H1 (cell line): ENCODE measurements at regions of chr5 and their contacts with region 1.

Region 1: GRCh38 chr5:17216176-17216973 is 1.1 kb upstream of the BASP1 start:
- DNase-seq: peak; percentile 63 to 84
- H3K4me3 ChIP-seq: peak overlapping the region; percentile 55 to 97 (median 80)
- H3K27ac ChIP-seq: no peak overlapping the region
- H3K4me1 ChIP-seq: peaks cover 2 to 11% (median 9%) of the 10 kb centered on the region in 4 experiments; a peak in 4 of 7 replicates
- H3K27me3 ChIP-seq: no peaks in the 10 kb centered on the region
- CTCF ChIP-seq: peak; percentile 65 to 88 (median 70)
- EP300 ChIP-seq: no peak
- POLR2A ChIP-seq: no peak
- RAD21 ChIP-seq: peak; percentile 93 to 94

Region 2: GRCh38 chr5:17069995-17070511 is 146.3 kb before region 1 on chr5:
- CTCF ChIA-PET with region 1: no interaction called
- POLR2A ChIA-PET with region 1: no interaction called
- DNase-seq: no peak
- H3K4me3 ChIP-seq: no peak overlapping the region
- H3K27ac ChIP-seq: no peak overlapping the region
- H3K4me1 ChIP-seq: no peaks in the 10 kb centered on the region; a peak in 1 of 7 replicates
- H3K27me3 ChIP-seq: no peaks in the 10 kb centered on the region
- CTCF ChIP-seq: no peak
- EP300 ChIP-seq: no peak
- POLR2A ChIP-seq: no peak
- RAD21 ChIP-seq: no peak

Region 3: GRCh38 chr5:17204133-17204489 is 12.3 kb before region 1 on chr5:
- CTCF ChIA-PET with region 1: interaction called, 12 read pairs
- POLR2A ChIA-PET with region 1: no interaction called
- DNase-seq: no peak
- H3K4me3 ChIP-seq: no peak overlapping the region
- H3K27ac ChIP-seq: no peak overlapping the region
- H3K4me1 ChIP-seq: peaks cover 0 to 2% (median 0%) of the 10 kb centered on the region in 4 experiments; a peak in 2 of 7 replicates
- H3K27me3 ChIP-seq: no peaks in the 10 kb centered on the region
- CTCF ChIP-seq: no peak
- EP300 ChIP-seq: no peak
- POLR2A ChIP-seq: no peak
- RAD21 ChIP-seq: no peak

Region 4: DNA sequence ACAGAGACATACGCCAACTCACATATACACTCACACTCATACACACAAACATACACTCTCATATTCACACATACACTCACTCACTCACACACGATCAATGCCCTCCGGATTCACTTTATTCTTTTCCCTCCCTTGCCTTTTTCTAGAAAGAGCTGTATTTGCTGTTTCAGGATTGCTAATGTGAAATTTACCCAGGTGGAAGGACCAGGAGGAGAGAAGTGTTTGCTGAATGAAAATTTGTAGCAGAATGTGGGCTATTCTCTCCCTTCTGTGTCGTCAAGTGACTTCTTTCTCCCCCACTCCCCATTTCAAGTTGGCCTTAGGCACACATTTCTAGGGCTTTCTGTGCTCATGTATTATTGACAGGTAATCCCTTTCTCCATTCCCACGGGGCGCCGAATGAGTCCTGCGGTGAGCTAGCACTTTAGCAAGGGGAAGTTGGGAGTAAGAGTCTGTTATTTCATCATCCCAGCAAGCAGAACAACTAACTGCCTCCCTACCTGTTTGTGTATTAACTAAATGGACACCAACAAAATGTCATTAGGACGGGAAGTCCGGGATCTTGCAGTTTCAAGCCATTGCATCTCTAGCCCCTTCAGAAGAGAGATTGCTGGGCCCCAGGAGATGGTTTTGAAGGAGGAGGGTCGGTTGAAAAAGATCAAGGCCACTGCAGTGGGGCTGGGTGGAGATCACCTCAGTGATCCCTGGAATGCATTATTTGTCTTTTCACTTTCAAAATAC is 184.5 kb after region 1 on chr5:
- CTCF ChIA-PET with region 1: interaction called, 23 read pairs
- POLR2A ChIA-PET with region 1: interaction called, 14 read pairs
- DNase-seq: peak in 1 of 2 experiments; percentile 55
- H3K4me3 ChIP-seq: peak overlapping the region in 2 of 4 experiments; percentile 11 to 47; a peak in 4 of 8 replicates
- H3K27ac ChIP-seq: 0 out of 2 replicates have a peak overlapping the region, but pooled peaks have one; percentile 0
- H3K4me1 ChIP-seq: peaks cover 7 to 36% (median 28%) of the 10 kb centered on the region in 4 experiments
- H3K27me3 ChIP-seq: peaks cover 0 to 6% (median 1%) of the 10 kb centered on the region in 4 experiments; a peak in 5 of 7 replicates
- CTCF ChIP-seq: no peak
- EP300 ChIP-seq: no peak
- POLR2A ChIP-seq: no peak
- RAD21 ChIP-seq: no peak

Region 5: GRCh38 chr5:17436761-17437221 is 220.4 kb after region 1 on chr5:
- CTCF ChIA-PET with region 1: interaction called, 21 read pairs
- POLR2A ChIA-PET with region 1: no interaction called
- DNase-seq: no peak
- H3K4me3 ChIP-seq: no peak overlapping the region
- H3K27ac ChIP-seq: no peak overlapping the region
- H3K4me1 ChIP-seq: no peaks in the 10 kb centered on the region
- H3K27me3 ChIP-seq: no peaks in the 10 kb centered on the region
- CTCF ChIP-seq: no peak
- EP300 ChIP-seq: no peak
- POLR2A ChIP-seq: no peak
- RAD21 ChIP-seq: no peak

Region 6: GRCh38 chr5:18305297-18305924 is 1089.0 kb after region 1 on chr5:
- CTCF ChIA-PET with region 1: interaction called, 30 read pairs
- POLR2A ChIA-PET with region 1: no interaction called
- DNase-seq: no peak
- H3K4me3 ChIP-seq: no peak overlapping the region
- H3K27ac ChIP-seq: no peak overlapping the region
- H3K4me1 ChIP-seq: peaks cover 0 to 6% (median 0%) of the 10 kb centered on the region in 4 experiments; a peak in 1 of 7 replicates
- H3K27me3 ChIP-seq: no peaks in the 10 kb centered on the region
- CTCF ChIP-seq: peak in 2 of 3 experiments; percentile 63 to 79; a peak in 3 of 4 replicates
- EP300 ChIP-seq: no peak
- POLR2A ChIP-seq: no peak
- RAD21 ChIP-seq: peak; percentile 93 to 94